Prostate gland (tissue), 2 donors: ENCODE measurements at regions of chr3 and their contacts with region 1.

Region 1: DNA sequence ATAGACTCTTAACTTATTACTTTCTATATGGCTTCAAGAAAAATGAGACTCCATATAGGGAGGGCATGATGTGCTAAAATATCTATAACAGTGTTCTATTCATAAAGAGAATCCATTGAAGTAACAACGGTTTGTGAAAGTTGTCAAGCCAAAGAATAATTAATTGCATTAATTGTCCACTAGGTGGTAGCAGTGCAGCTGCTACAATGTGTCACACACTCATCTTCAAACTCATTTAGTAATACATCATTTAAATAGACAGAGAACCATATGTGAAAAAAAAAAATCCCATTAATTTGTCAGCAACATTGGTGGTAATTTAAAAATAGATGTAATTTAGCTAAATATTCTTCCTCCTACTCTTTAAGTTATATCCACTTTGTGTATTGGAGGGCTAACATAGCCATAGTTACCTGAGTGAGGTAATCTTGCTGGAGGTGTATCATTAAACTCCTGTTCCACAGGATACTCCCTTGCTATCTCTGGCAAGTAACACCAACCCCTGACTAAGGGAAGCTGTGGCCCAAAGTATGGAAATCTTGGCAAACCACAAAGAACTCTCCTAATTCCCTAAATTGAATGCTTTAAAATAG is 3.7 kb upstream of the CPA3 start:
- DNase-seq: no peak
- H3K4me3 ChIP-seq: no peak overlapping the region
- H3K27ac ChIP-seq: no peak overlapping the region
- H3K4me1 ChIP-seq: no peaks in the 10 kb centered on the region
- H3K27me3 ChIP-seq: no peaks in the 10 kb centered on the region
- CTCF ChIP-seq: peak; percentile 40 to 77 (median 66)
- POLR2A ChIP-seq: no peak

Region 2: DNA sequence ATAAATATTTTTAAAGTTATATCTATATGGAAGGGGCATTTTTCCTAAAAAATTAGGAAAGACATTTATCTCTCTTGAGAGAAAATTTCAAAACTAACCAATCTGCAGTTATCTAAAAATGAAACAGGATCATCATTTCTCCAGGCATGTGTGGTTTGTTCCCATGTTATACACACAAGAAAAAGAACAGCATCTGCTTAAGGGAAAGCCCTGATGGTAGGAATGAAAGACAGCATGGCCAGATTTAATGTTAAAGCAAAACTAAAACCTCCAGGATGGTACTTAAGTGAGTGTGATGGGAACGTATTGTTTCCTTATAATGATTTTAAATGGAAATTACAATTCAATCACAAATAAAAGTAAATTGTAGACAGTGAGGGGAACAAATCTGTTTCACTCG is 83.7 kb after region 1 on chr3:
- intact Hi-C with region 1: loop called (anchors 5 kb)
- DNase-seq: no peak
- H3K4me3 ChIP-seq: no peak overlapping the region
- H3K27ac ChIP-seq: no peak overlapping the region
- H3K4me1 ChIP-seq: no peaks in the 10 kb centered on the region
- H3K27me3 ChIP-seq: no peaks in the 10 kb centered on the region
- CTCF ChIP-seq: no peak
- POLR2A ChIP-seq: no peak

Region 3: DNA sequence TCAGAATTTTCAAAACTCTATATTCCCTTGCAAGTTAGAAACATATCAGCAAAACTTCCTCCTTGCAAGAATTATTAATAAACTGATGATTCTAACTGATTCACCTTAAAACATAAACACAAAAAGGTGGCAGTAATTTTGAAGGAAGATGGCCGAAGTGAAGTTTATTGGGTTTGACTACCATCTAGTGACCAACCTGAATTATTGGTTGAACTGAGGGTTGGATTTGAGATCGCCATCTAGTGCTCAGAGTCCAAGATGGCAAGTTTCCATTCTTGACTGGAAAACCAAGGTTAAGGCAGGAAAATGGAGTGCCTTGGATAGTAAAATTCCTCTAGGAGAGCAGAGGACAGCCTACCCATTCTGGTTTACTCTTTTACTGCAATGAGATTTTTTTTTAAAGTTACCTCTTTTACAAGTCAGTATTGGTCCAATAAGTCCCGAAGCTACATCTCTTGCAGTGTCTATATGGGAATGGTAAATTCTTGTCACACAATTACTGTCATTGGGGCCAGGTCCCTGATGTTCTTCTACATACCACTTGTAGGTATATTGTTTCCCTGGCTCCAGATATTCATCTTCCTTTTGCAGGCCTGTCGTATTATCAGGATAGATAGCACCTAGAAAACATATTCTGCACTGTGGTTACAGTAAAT is 411.9 kb after region 1 on chr3:
- intact Hi-C with region 1: loop called (anchors 10 kb)
- DNase-seq: peak; percentile 51
- H3K4me3 ChIP-seq: no peak overlapping the region
- H3K27ac ChIP-seq: no peak overlapping the region
- H3K4me1 ChIP-seq: no peaks in the 10 kb centered on the region
- H3K27me3 ChIP-seq: no peaks in the 10 kb centered on the region
- CTCF ChIP-seq: peak; percentile 88 to 96 (median 94)
- POLR2A ChIP-seq: no peak